ENCODE measurements at regions of chr2 and their contacts with region 1.

Region 1: GRCh38 chr2:190880378-190881073 is at the start of gene GLS:
- DNase-seq: peak; percentile 93 to 98 (median 96)
- ATAC-seq: peak; percentile 75
- H3K4me3 ChIP-seq: peak within 1 kb of the TSS; percentile 82 to 95
- H3K4me3 Mint-ChIP-seq: peak within 1 kb of the TSS; percentile 98
- H3K27ac ChIP-seq: peak within 1 kb of the TSS; percentile 93 to 94
- H3K27ac Mint-ChIP-seq: peak within 1 kb of the TSS; percentile 99
- H3K4me1 ChIP-seq: peaks cover 50% of the 10 kb centered on the region
- H3K4me1 Mint-ChIP-seq: peaks cover 50% of the 10 kb centered on the region
- H3K27me3 ChIP-seq: no peaks in the 10 kb centered on the region
- H3K27me3 Mint-ChIP-seq: no peaks in the 10 kb centered on the region
- CTCF ChIP-seq: no peak
- total RNA-seq, gene GLS: 254 to 265 TPM

Region 2: GRCh38 chr2:189762551-189763298 is 1117.8 kb before region 1 on chr2 and contains the start of gene OSGEPL1:
- CTCF ChIA-PET with region 1: no interaction called
- POLR2A ChIA-PET with region 1: interaction called, 3 read pairs
- intact Hi-C with region 1: loop called in 1 of 2 experiments (anchors 5 kb)
- DNase-seq: peak; percentile 84 to 97 (median 94)
- ATAC-seq: peak; percentile 92
- H3K4me3 ChIP-seq: peak within 1 kb of the TSS; percentile 69 to 83
- H3K4me3 Mint-ChIP-seq: peak within 1 kb of the TSS; percentile 97
- H3K27ac ChIP-seq: peak within 1 kb of the TSS; percentile 85 to 88
- H3K27ac Mint-ChIP-seq: peak within 1 kb of the TSS; percentile 98
- H3K4me1 ChIP-seq: peaks cover 8% of the 10 kb centered on the region
- H3K4me1 Mint-ChIP-seq: peaks cover 15% of the 10 kb centered on the region
- H3K27me3 ChIP-seq: no peaks in the 10 kb centered on the region
- H3K27me3 Mint-ChIP-seq: no peaks in the 10 kb centered on the region
- CTCF ChIP-seq: peak; percentile 52
- total RNA-seq, gene OSGEPL1: 3.6 to 3.9 TPM

Region 3: GRCh38 chr2:190534310-190535120 is 346.0 kb before region 1 on chr2 and contains the start of gene NEMP2:
- CTCF ChIA-PET with region 1: no interaction called
- POLR2A ChIA-PET with region 1: interaction called, 15 read pairs
- intact Hi-C with region 1: loop called (anchors 5 kb)
- DNase-seq: peak; percentile 69 to 93 (median 81)
- ATAC-seq: peak; percentile 68
- H3K4me3 ChIP-seq: peak within 1 kb of the TSS; percentile 67 to 73
- H3K4me3 Mint-ChIP-seq: peak within 1 kb of the TSS; percentile 96
- H3K27ac ChIP-seq: peak within 1 kb of the TSS; percentile 92 to 95
- H3K27ac Mint-ChIP-seq: peak within 1 kb of the TSS; percentile 100
- H3K4me1 ChIP-seq: peaks cover 39% of the 10 kb centered on the region
- H3K4me1 Mint-ChIP-seq: peaks cover 64% of the 10 kb centered on the region
- H3K27me3 ChIP-seq: no peaks in the 10 kb centered on the region
- H3K27me3 Mint-ChIP-seq: no peaks in the 10 kb centered on the region
- CTCF ChIP-seq: no peak
- total RNA-seq, gene NEMP2: 7.2 to 7.8 TPM

Region 4: GRCh38 chr2:190858817-190859216 is 21.7 kb before region 1 on chr2:
- CTCF ChIA-PET with region 1: no interaction called
- POLR2A ChIA-PET with region 1: interaction called, 16 read pairs
- intact Hi-C with region 1: loop called in 1 of 2 experiments (anchors 1 kb)
- DNase-seq: no peak
- ATAC-seq: no peak
- H3K4me3 ChIP-seq: no peak overlapping the region
- H3K4me3 Mint-ChIP-seq: no peak overlapping the region
- H3K27ac ChIP-seq: no peak overlapping the region
- H3K27ac Mint-ChIP-seq: no peak overlapping the region
- H3K4me1 ChIP-seq: peaks cover 13% of the 10 kb centered on the region
- H3K4me1 Mint-ChIP-seq: peaks cover 16% of the 10 kb centered on the region
- H3K27me3 ChIP-seq: no peaks in the 10 kb centered on the region
- H3K27me3 Mint-ChIP-seq: no peaks in the 10 kb centered on the region
- CTCF ChIP-seq: no peak

Region 5: DNA sequence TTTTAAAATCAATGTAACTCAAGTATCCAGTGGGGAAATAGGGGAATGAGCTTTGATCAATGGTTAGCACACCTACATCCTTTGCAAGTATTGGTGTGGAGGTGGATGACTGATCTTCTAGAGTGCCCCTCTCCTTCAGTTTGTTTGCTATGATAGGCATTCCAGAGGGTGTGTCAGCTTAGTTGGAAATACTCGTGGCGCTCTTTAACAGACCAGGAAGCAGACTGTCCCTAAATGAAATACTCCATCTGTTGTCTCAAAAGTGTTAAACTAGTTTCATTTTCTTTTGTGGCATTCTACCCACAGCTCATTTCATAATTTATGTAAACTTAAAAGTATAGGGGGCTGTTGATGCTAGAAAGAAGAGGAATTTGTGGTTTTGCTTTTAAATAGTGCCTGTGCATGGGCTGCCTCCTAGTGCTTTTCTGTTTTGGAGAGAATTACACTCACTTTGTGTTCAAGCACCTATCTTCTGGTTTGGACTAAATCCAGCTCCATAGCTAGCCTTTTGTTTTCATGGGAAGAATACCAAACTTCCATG is 67.3 kb after region 1 on chr2:
- CTCF ChIA-PET with region 1: interaction called, 6 read pairs
- POLR2A ChIA-PET with region 1: interaction called, 23 read pairs
- intact Hi-C with region 1: loop called (anchors 5 kb)
- DNase-seq: peak in 3 of 9 experiments; percentile 43 to 76 (median 53)
- ATAC-seq: peak; percentile 91
- H3K4me3 ChIP-seq: no peak overlapping the region
- H3K4me3 Mint-ChIP-seq: peak overlapping the region; percentile 73
- H3K27ac ChIP-seq: peak overlapping the region; percentile 26 to 34
- H3K27ac Mint-ChIP-seq: peak overlapping the region; percentile 98
- H3K4me1 ChIP-seq: peaks cover 19% of the 10 kb centered on the region
- H3K4me1 Mint-ChIP-seq: peaks cover 31% of the 10 kb centered on the region
- H3K27me3 ChIP-seq: no peaks in the 10 kb centered on the region
- H3K27me3 Mint-ChIP-seq: no peaks in the 10 kb centered on the region
- CTCF ChIP-seq: peak; percentile 45

Region 6: GRCh38 chr2:191150600-191151330 is 270.2 kb after region 1 on chr2 and contains the start of gene STAT4:
- CTCF ChIA-PET with region 1: no interaction called
- POLR2A ChIA-PET with region 1: interaction called, 9 read pairs
- intact Hi-C with region 1: loop called (anchors 1 to 2 kb)
- DNase-seq: peak; percentile 64 to 98 (median 82)
- ATAC-seq: peak; percentile 82
- H3K4me3 ChIP-seq: peak within 1 kb of the TSS; percentile 80 to 90
- H3K4me3 Mint-ChIP-seq: peak within 1 kb of the TSS; percentile 96
- H3K27ac ChIP-seq: peak within 1 kb of the TSS; percentile 93 to 98
- H3K27ac Mint-ChIP-seq: peak within 1 kb of the TSS; percentile 95
- H3K4me1 ChIP-seq: peaks cover 49% of the 10 kb centered on the region
- H3K4me1 Mint-ChIP-seq: peaks cover 54% of the 10 kb centered on the region
- H3K27me3 ChIP-seq: no peaks in the 10 kb centered on the region
- H3K27me3 Mint-ChIP-seq: no peaks in the 10 kb centered on the region
- CTCF ChIP-seq: no peak
- total RNA-seq, gene STAT4: 136 to 141 TPM

Measured in CD8-positive, alpha-beta T cell (primary cell).